MCF 10A (cell line): ENCODE measurements at regions of chr14 and their contacts with region 1.

Region 1: GRCh38 chr14:64986578-64987571 is at the start of gene FNTB:
- DNase-seq: peak; percentile 97
- H3K4me3 Mint-ChIP-seq: peak within 1 kb of the TSS; percentile 79
- H3K27ac Mint-ChIP-seq: peak within 1 kb of the TSS; percentile 76
- H3K4me1 Mint-ChIP-seq: peaks cover 10% of the 10 kb centered on the region
- H3K27me3 Mint-ChIP-seq: peaks cover 12% of the 10 kb centered on the region
- CTCF ChIP-seq: peak; percentile 45
- total RNA-seq, gene FNTB: 12.2 and 13.1 TPM in 2 replicates

Region 2: GRCh38 chr14:64726585-64726890 is 260.3 kb before region 1 on chr14:
- CTCF ChIA-PET with region 1: no interaction called
- POLR2A ChIA-PET with region 1: no interaction called
- intact Hi-C with region 1: no loop called
- DNase-seq: peak; percentile 87
- H3K4me3 Mint-ChIP-seq: peak overlapping the region; percentile 23
- H3K27ac Mint-ChIP-seq: peak overlapping the region; percentile 90
- H3K4me1 Mint-ChIP-seq: peaks cover 34% of the 10 kb centered on the region
- H3K27me3 Mint-ChIP-seq: no peaks in the 10 kb centered on the region
- CTCF ChIP-seq: no peak

Region 3: DNA sequence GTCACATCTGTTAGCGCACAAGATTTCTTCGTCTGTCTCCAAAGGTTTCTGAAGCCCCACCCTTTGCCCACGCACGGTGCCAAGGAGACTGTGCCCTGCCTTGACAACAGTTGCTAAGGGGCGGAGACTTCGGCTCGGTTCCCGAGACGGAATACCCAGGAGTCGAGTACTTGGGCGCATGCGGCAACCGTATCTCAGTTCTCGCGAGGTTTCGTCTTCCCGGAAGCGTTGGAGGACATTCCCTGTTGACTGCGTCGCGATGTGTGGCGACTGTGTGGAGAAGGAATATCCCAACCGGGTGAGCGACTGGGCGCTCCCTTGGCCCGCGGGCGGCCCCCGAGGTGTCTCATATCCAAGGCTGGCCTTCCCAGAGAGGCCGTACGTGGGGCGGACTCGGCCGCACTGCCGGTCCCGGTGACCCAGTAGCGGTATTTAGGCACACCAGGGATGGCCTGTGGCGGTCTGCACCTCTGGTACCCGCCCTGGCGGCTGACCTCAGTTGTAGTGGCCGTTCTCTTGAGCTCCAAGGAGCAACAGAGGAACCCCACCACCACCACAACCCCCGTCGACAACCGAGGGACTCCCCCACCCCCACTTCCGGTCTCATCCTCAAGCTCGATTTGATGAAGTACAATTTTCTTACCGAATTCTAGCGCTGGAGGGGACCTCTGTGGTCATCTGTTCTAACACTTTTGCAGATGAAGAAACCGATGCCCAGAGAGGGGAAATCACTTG is 72.5 kb before region 1 on chr14 and contains the start of gene CHURC1:
- CTCF ChIA-PET with region 1: interaction called, 4 read pairs
- POLR2A ChIA-PET with region 1: interaction called, 15 read pairs
- intact Hi-C with region 1: loop called (anchors 5 kb)
- DNase-seq: peak; percentile 99
- H3K4me3 Mint-ChIP-seq: peak within 1 kb of the TSS; percentile 85
- H3K27ac Mint-ChIP-seq: peak within 1 kb of the TSS; percentile 98
- H3K4me1 Mint-ChIP-seq: peaks cover 25% of the 10 kb centered on the region
- H3K27me3 Mint-ChIP-seq: no peaks in the 10 kb centered on the region
- CTCF ChIP-seq: no peak
- total RNA-seq, gene CHURC1: 72.5 and 89.2 TPM in 2 replicates

Region 4: GRCh38 chr14:65002586-65003210 is 15.8 kb after region 1 on chr14:
- CTCF ChIA-PET with region 1: interaction called, 11 read pairs
- POLR2A ChIA-PET with region 1: interaction called, 55 read pairs
- intact Hi-C with region 1: no loop called
- DNase-seq: no peak
- H3K4me3 Mint-ChIP-seq: no peak overlapping the region
- H3K27ac Mint-ChIP-seq: no peak overlapping the region
- H3K4me1 Mint-ChIP-seq: peaks cover 23% of the 10 kb centered on the region
- H3K27me3 Mint-ChIP-seq: no peaks in the 10 kb centered on the region
- CTCF ChIP-seq: no peak

Region 5: GRCh38 chr14:65102441-65103149 is 115.7 kb after region 1 on chr14 and contains the start of gene MAX:
- CTCF ChIA-PET with region 1: interaction called, 3 read pairs
- POLR2A ChIA-PET with region 1: interaction called, 15 read pairs
- intact Hi-C with region 1: loop called (anchors 1 kb)
- DNase-seq: peak; percentile 98
- H3K4me3 Mint-ChIP-seq: peak within 1 kb of the TSS; percentile 74
- H3K27ac Mint-ChIP-seq: peak within 1 kb of the TSS; percentile 94
- H3K4me1 Mint-ChIP-seq: peaks cover 17% of the 10 kb centered on the region
- H3K27me3 Mint-ChIP-seq: no peaks in the 10 kb centered on the region
- CTCF ChIP-seq: no peak
- total RNA-seq, gene MAX: 116 and 125 TPM in 2 replicates

Region 6: GRCh38 chr14:65287264-65288131 is 300.6 kb after region 1 on chr14:
- CTCF ChIA-PET with region 1: no interaction called
- POLR2A ChIA-PET with region 1: no interaction called
- intact Hi-C with region 1: no loop called
- DNase-seq: no peak
- H3K4me3 Mint-ChIP-seq: no peak overlapping the region
- H3K27ac Mint-ChIP-seq: no peak overlapping the region
- H3K4me1 Mint-ChIP-seq: peaks cover 6% of the 10 kb centered on the region
- H3K27me3 Mint-ChIP-seq: no peaks in the 10 kb centered on the region
- CTCF ChIP-seq: no peak

Region 7: DNA sequence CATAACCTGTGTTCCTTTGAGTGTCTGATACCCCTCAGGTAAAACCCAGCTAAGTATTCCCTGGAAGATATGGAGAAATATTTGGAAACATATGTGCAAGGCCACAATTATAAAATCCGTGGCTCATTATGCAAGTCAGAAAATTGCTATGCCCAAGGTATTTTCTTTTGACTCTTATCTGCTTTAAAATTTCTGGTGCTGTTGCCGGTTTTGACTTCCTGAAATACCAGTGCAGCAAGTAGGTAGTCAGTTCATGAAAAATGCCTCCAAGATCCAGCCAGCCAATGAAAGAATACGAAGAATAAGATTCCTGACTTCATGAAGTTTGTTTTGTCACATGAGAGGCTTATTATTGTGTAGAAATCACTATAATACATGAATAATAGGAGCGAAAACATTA is 405.4 kb after region 1 on chr14:
- CTCF ChIA-PET with region 1: no interaction called
- POLR2A ChIA-PET with region 1: no interaction called
- intact Hi-C with region 1: no loop called
- DNase-seq: no peak
- H3K4me3 Mint-ChIP-seq: no peak overlapping the region
- H3K27ac Mint-ChIP-seq: no peak overlapping the region
- H3K4me1 Mint-ChIP-seq: no peaks in the 10 kb centered on the region
- H3K27me3 Mint-ChIP-seq: no peaks in the 10 kb centered on the region
- CTCF ChIP-seq: no peak